ENCODE measurements at regions of chr4 and their contacts with region 1.

Region 1: GRCh38 chr4:84582302-84583000 is 476 bp upstream of the CDS1 start:
- DNase-seq: peak; percentile 76 to 89 (median 84)
- ATAC-seq: peak; percentile 83 to 94 (median 92)
- H3K4me3 ChIP-seq: peak overlapping the region; percentile 50 to 83 (median 77)
- H3K27ac ChIP-seq: peak overlapping the region in 10 of 12 donors; percentile 23 to 83 (median 56)
- H3K4me1 ChIP-seq: peaks cover 0 to 19% (median 9%) of the 10 kb centered on the region in 12 donors
- H3K27me3 ChIP-seq: peaks cover 0 to 44% (median 13%) of the 10 kb centered on the region in 9 donors
- CTCF ChIP-seq: no peak
- POLR2A ChIP-seq: no peak

Region 2: DNA sequence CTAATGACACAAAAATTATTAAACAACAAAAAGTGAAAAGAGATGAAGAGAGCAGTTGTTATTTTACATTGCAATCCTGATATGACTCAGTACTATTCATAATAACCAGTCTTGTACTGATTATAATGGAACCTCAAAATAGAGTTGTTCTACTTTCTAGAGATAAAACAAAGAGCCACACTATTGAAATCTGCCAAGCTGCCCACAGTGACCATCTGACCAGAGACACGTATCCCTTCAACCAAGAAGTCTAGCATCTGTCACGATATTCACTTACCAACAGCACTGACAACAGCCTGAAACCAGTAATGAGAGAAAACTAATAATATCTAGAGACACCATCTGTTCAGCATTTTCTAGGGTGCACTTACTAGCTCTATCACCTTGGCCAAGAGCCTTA is 550.1 kb before region 1 on chr4:
- intact Hi-C with region 1: no loop called
- DNase-seq: no peak
- ATAC-seq: no peak
- H3K4me3 ChIP-seq: no peak overlapping the region
- H3K27ac ChIP-seq: no peak overlapping the region
- H3K4me1 ChIP-seq: no peaks in the 10 kb centered on the region
- H3K27me3 ChIP-seq: peaks cover 0 to 2% (median 0%) of the 10 kb centered on the region in 9 donors
- CTCF ChIP-seq: no peak
- POLR2A ChIP-seq: no peak

Region 3: GRCh38 chr4:84547211-84547610 is 35.2 kb before region 1 on chr4:
- intact Hi-C with region 1: no loop called
- DNase-seq: no peak
- ATAC-seq: no peak
- H3K4me3 ChIP-seq: no peak overlapping the region
- H3K27ac ChIP-seq: no peak overlapping the region
- H3K4me1 ChIP-seq: no peaks in the 10 kb centered on the region
- H3K27me3 ChIP-seq: peaks cover 0 to 9% (median 0%) of the 10 kb centered on the region in 9 donors
- CTCF ChIP-seq: no peak
- POLR2A ChIP-seq: no peak

Region 4: DNA sequence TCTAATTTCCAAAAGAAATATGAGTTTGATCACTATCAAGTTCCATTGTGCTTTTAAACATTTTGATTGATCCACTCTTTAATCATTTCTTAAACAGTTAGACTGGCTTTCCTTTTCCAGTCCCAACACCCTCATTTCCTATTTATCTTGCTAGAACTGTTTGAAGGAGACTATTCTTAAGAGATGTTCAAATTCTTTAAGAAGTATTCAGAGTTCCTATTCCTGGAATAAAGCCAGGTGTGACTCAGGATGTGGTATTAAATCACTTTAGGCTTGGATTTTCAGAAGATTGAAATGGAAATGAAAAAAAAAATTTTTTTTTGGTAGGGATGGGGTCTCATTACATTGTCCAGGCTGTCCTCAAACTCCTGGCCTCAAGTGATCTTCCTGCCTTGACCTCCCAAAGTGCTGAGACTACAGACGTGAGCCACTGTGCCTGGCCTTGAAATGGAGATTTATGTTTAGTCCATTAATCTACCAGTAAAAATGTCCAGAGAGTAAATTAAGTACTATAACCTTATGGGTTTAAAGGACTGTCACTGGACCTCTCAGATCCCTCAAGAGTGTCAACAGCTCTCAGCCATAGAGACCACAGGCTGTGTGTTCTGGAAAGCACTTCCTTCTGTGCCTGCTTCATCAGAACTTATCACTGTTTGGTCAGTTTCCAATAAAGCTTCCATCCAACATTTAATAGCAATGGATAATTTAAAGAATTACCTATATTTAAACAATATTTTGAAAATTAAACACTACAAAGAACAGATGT is 91.2 kb after region 1 on chr4:
- intact Hi-C with region 1: loop called in 2 of 10 experiments (anchors 5 to 10 kb)
- DNase-seq: no peak
- ATAC-seq: no peak
- H3K4me3 ChIP-seq: no peak overlapping the region
- H3K27ac ChIP-seq: no peak overlapping the region
- H3K4me1 ChIP-seq: peaks cover 0 to 13% (median 0%) of the 10 kb centered on the region in 12 donors
- H3K27me3 ChIP-seq: no peaks in the 10 kb centered on the region
- CTCF ChIP-seq: no peak
- POLR2A ChIP-seq: no peak

Region 5: GRCh38 chr4:84678976-84679744 is 96.7 kb after region 1 on chr4:
- intact Hi-C with region 1: loop called in 2 of 10 experiments (anchors 5 to 10 kb)
- DNase-seq: no peak
- ATAC-seq: peak in 1 of 4 donors; percentile 8
- H3K4me3 ChIP-seq: no peak overlapping the region
- H3K27ac ChIP-seq: no peak overlapping the region
- H3K4me1 ChIP-seq: peaks cover 5 to 33% (median 16%) of the 10 kb centered on the region in 12 donors
- H3K27me3 ChIP-seq: no peaks in the 10 kb centered on the region
- CTCF ChIP-seq: no peak
- POLR2A ChIP-seq: no peak